OCI-LY7 (cell line): ENCODE measurements at regions of chr17 and their contacts with region 1.

Region 1: GRCh38 chr17:9291912-9292560 is 270.7 kb downstream of the NTN1 start:
- DNase-seq: peak; percentile 16
- H3K4me3 ChIP-seq: no peak overlapping the region
- H3K27ac ChIP-seq: no peak overlapping the region
- H3K4me1 ChIP-seq: no peaks in the 10 kb centered on the region
- CTCF ChIP-seq: peak; percentile 78

Region 2: GRCh38 chr17:9251273-9251672 is 40.8 kb before region 1 on chr17:
- CTCF ChIA-PET with region 1: no interaction called
- POLR2A ChIA-PET with region 1: interaction called, 10 read pairs
- intact Hi-C with region 1: no loop called
- DNase-seq: no peak
- H3K4me3 ChIP-seq: no peak overlapping the region
- H3K27ac ChIP-seq: no peak overlapping the region
- H3K4me1 ChIP-seq: no peaks in the 10 kb centered on the region
- CTCF ChIP-seq: no peak

Region 3: GRCh38 chr17:9451934-9452333 is 159.9 kb after region 1 on chr17:
- CTCF ChIA-PET with region 1: no interaction called
- POLR2A ChIA-PET with region 1: no interaction called
- intact Hi-C with region 1: no loop called
- DNase-seq: no peak
- H3K4me3 ChIP-seq: no peak overlapping the region
- H3K27ac ChIP-seq: no peak overlapping the region
- H3K4me1 ChIP-seq: no peaks in the 10 kb centered on the region
- CTCF ChIP-seq: no peak

Region 4: DNA sequence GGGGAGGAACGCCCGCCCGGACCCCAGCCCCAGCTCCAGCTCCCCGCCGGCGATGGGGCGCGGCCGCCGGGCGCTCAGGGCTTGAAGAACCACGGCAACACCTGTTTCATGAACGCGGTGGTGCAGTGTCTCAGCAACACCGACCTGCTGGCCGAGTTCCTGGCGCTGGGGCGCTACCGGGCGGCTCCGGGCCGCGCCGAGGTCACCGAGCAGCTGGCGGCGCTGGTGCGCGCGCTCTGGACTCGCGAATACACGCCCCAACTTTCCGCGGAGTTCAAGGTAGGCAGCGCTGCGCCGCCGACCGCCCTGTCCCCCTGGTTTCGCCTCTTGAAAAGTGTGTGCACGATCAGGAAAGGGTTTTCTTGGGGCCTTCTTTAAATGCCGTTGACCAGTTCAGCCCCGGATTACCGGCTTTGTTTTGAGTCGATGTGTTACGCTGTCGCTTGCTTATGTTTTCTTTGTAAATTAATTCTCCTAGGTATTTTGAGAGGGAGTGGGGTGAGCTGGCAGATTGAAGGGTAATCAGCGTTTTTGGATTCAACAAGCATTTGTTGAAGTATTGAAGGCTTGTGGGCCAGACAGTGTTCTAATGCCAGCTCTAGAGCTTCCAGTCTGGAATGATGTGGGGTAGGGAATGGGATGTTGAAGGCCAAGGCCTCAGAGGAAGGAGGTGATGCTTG is 354.0 kb after region 1 on chr17:
- CTCF ChIA-PET with region 1: no interaction called
- POLR2A ChIA-PET with region 1: no interaction called
- intact Hi-C with region 1: no loop called
- DNase-seq: no peak
- H3K4me3 ChIP-seq: peak overlapping the region; percentile 79
- H3K27ac ChIP-seq: no peak overlapping the region
- H3K4me1 ChIP-seq: peaks cover 11% of the 10 kb centered on the region
- CTCF ChIP-seq: no peak